ENCODE measurements at regions of chr22 and their contacts with region 1.

Region 1: GRCh38 chr22:28810821-28811491 is 10.6 kb upstream of the XBP1 start:
- DNase-seq: peak; percentile 46
- ATAC-seq: peak; percentile 24
- H3K4me3 Mint-ChIP-seq: peak overlapping the region; percentile 53
- H3K27ac Mint-ChIP-seq: peak overlapping the region; percentile 42
- H3K4me1 Mint-ChIP-seq: peaks cover 53% of the 10 kb centered on the region
- H3K27me3 Mint-ChIP-seq: no peaks in the 10 kb centered on the region

Region 2: GRCh38 chr22:28750471-28750881 is 60.5 kb before region 1 on chr22:
- CTCF ChIA-PET with region 1: interaction called, 3 read pairs
- POLR2A ChIA-PET with region 1: interaction called, 13 read pairs
- intact Hi-C with region 1: no loop called
- DNase-seq: no peak
- ATAC-seq: no peak
- H3K4me3 Mint-ChIP-seq: no peak overlapping the region
- H3K27ac Mint-ChIP-seq: no peak overlapping the region
- H3K4me1 Mint-ChIP-seq: no peaks in the 10 kb centered on the region
- H3K27me3 Mint-ChIP-seq: no peaks in the 10 kb centered on the region

Region 3: GRCh38 chr22:28772633-28773460 is 38.1 kb before region 1 on chr22 and contains the start of gene CCDC117:
- CTCF ChIA-PET with region 1: no interaction called
- POLR2A ChIA-PET with region 1: no interaction called
- intact Hi-C with region 1: loop called in 1 of 2 experiments (anchors 5 kb)
- DNase-seq: peak; percentile 96
- ATAC-seq: peak; percentile 91
- H3K4me3 Mint-ChIP-seq: peak within 1 kb of the TSS; percentile 94
- H3K27ac Mint-ChIP-seq: peak within 1 kb of the TSS; percentile 99
- H3K4me1 Mint-ChIP-seq: peaks cover 19% of the 10 kb centered on the region
- H3K27me3 Mint-ChIP-seq: no peaks in the 10 kb centered on the region
- total RNA-seq, gene CCDC117: 36.1 to 36.8 TPM

Region 4: GRCh38 chr22:29663180-29663821 is 852.3 kb after region 1 on chr22:
- CTCF ChIA-PET with region 1: no interaction called
- POLR2A ChIA-PET with region 1: no interaction called
- intact Hi-C with region 1: no loop called
- DNase-seq: no peak
- ATAC-seq: no peak
- H3K4me3 Mint-ChIP-seq: no peak overlapping the region
- H3K27ac Mint-ChIP-seq: no peak overlapping the region
- H3K4me1 Mint-ChIP-seq: no peaks in the 10 kb centered on the region
- H3K27me3 Mint-ChIP-seq: no peaks in the 10 kb centered on the region